Activated naive CD4-positive, alpha-beta T cell treated with anti-CD3 and anti-CD28 coated beads, Interleukin-2, amount 10 ng/mL, durations not matched to agents 7 days and 5 days (primary cell): ENCODE measurements at regions of chr13 and their contacts with region 1.

Region 1: DNA sequence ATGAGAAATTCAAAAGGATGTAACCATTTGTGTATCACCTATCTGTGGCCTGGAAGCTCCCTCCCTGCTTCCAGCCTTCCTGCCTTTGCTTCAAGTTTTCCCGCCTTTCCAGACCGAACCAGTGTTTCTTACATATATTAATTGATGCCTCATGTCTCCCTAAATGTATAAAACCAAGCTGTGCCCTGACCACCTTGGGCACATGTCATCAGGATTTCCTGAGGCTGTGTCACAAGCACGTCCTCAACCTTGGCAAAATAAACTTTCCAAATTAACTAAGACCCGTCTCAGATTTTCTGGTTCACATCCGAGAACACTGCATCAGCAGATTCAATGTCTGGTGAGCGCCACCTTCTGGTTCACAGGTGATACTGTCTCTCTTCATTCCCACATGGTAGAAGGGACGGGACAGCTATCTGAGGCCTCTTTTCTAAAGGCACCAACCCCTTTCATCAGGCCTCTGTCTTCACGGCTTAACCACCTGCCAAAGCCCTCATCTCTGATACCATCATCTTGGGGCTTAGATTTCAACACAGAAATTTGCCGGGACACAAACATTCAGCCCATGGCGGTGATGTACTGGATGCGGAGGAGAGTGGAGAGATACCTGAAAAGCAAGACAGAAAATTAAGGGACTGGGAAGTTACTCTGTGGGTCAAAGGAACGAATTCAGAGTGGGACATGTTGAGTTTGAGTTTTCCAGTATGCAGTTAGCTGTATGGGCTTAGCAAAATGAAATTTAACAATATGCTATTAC is 58.7 kb upstream of the PABPC3 start:
- DNase-seq: peak; percentile 70
- H3K4me3 Mint-ChIP-seq: no peak overlapping the region
- H3K27ac Mint-ChIP-seq: no peak overlapping the region
- H3K4me1 Mint-ChIP-seq: no peaks in the 10 kb centered on the region
- H3K27me3 Mint-ChIP-seq: peaks cover 36% of the 10 kb centered on the region

Region 2: DNA sequence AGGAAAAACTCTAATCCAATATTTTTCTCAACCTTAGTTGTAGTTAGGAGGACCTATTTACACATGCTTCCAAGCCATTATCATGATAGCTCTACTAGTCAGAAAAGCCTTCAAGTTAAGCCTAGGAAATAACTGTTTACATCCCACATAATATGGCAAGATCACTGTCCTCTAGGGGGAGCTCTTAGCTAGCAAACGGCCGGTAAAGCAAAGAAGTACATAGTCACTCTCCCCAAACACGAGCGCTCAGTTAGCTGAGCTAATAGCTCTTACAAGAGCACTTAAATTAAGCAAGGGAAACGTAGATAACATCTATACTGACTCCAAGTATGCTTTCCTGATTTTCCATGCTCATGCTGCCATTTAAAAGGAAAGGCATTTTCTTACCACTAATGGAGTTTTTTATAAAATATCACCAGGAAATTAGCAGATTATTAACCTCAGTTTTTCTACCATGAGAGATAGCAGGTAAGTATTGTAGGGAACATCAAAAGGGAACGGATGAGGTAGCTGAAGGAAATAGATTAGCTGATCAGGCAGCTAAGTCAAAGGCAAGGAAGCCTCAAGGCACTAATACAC is 41.9 kb before region 1 on chr13:
- CTCF ChIA-PET with region 1: interaction called, 16 read pairs
- DNase-seq: peak; percentile 73
- H3K4me3 Mint-ChIP-seq: no peak overlapping the region
- H3K27ac Mint-ChIP-seq: no peak overlapping the region
- H3K4me1 Mint-ChIP-seq: peaks cover 3% of the 10 kb centered on the region
- H3K27me3 Mint-ChIP-seq: peaks cover 26% of the 10 kb centered on the region

Region 3: DNA sequence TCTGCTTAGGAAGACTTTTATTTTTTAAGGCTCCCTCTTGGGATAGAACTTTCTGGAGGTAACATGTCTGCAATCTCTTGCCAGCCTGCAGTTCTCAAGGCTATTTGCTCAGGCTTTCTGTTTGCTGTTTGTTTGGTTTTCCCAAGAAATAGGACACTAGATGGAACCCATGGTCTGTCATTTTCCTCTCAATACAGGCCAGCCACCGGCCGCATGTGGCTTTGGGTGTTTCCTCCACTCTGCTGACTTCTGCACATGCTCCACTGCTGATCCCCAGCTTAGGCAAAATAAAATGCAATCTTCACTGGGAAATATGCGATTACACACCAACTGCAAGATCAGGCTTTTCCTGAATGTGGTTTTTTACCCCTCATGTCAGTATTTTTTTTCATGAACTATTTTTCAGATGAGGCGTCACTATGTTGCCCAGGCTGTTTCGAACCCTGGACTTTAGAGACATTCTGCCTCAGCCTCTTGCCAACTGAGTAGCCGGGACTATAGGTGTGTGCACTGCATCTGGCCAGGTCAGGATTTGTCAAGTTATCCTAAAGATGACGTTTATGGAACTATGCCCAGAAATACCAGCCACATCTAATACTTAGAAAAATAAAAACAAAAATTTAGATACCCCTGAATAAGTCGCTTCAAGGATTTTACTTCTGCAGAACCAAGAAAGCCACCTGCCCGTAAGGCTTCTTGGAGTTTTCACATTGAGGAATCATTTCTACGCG is 35.6 kb before region 1 on chr13:
- CTCF ChIA-PET with region 1: interaction called, 12 read pairs
- DNase-seq: no peak
- H3K4me3 Mint-ChIP-seq: no peak overlapping the region
- H3K27ac Mint-ChIP-seq: no peak overlapping the region
- H3K4me1 Mint-ChIP-seq: peaks cover 4% of the 10 kb centered on the region
- H3K27me3 Mint-ChIP-seq: peaks cover 52% of the 10 kb centered on the region

Region 4: GRCh38 chr13:25051065-25051464 is 13.8 kb after region 1 on chr13:
- CTCF ChIA-PET with region 1: no interaction called
- DNase-seq: no peak
- H3K4me3 Mint-ChIP-seq: no peak overlapping the region
- H3K27ac Mint-ChIP-seq: no peak overlapping the region
- H3K4me1 Mint-ChIP-seq: no peaks in the 10 kb centered on the region
- H3K27me3 Mint-ChIP-seq: peaks cover 41% of the 10 kb centered on the region